Ascending aorta (tissue), 2 donors: ENCODE measurements at regions of chr3 and their contacts with region 1.

Region 1: GRCh38 chr3:77530870-77531269 is 491.0 kb downstream of the ROBO2 start:
- DNase-seq: peak in 1 of 2 donors; percentile 65
- H3K4me3 ChIP-seq: peak overlapping the region; percentile 1 to 4
- H3K27ac ChIP-seq: peak overlapping the region; percentile 6 to 47
- H3K4me1 ChIP-seq: no peaks in the 10 kb centered on the region
- H3K27me3 ChIP-seq: no peaks in the 10 kb centered on the region
- CTCF ChIP-seq: no peak

Region 2: DNA sequence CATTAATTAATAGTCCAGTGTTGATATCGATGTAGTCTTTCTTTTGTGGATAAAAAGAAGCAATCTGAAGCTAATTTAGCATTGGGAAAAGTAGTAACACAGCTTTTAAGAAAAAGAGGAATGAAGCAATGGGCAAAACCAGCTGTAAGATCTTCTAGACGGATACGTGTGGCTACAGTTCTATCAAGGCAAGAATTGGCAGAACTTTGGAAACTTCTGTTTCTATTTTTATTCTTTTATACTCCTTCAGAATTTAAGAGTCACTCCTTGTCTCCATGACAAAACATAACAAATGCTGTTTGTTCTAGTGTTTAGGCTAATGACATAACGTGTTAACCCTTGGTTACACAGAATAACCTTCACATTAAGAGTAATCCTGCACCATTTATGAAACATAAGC is 201.8 kb before region 1 on chr3:
- intact Hi-C with region 1: loop called (anchors 5 kb)
- DNase-seq: no peak
- H3K4me3 ChIP-seq: peak overlapping the region in 1 of 2 donors; percentile 36
- H3K27ac ChIP-seq: peak overlapping the region; percentile 68 to 72
- H3K4me1 ChIP-seq: peaks cover 0 to 20% of the 10 kb centered on the region in 2 donors
- H3K27me3 ChIP-seq: no peaks in the 10 kb centered on the region
- CTCF ChIP-seq: no peak

Region 3: GRCh38 chr3:77370413-77370812 is 160.5 kb before region 1 on chr3:
- intact Hi-C with region 1: loop called (anchors 10 kb)
- DNase-seq: peak in 1 of 2 donors; percentile 72
- H3K4me3 ChIP-seq: no peak overlapping the region
- H3K27ac ChIP-seq: peak overlapping the region in 1 of 2 donors; percentile 18
- H3K4me1 ChIP-seq: peaks cover 0 to 2% of the 10 kb centered on the region in 2 donors
- H3K27me3 ChIP-seq: no peaks in the 10 kb centered on the region
- CTCF ChIP-seq: no peak

Region 4: DNA sequence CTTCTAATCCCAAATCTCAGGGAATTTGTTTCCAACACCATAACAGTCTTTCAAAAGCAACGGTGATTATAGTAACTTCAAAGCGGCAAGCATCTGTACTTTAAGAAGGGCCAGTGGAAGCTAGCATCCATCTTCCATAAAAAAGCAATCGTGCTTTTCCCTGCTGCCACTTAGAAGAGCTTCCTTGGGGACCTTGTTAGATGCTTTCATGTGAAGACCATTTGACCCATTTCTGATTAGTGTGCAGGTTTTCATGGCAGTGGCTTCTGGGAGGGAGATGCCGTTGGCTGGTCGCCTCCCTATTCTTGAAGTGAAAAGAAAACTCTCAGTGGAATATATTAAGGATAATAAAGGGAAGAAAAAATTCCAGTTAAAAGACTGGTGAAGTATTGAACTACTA is 136.8 kb before region 1 on chr3:
- intact Hi-C with region 1: no loop called
- DNase-seq: no peak
- H3K4me3 ChIP-seq: no peak overlapping the region
- H3K27ac ChIP-seq: no peak overlapping the region
- H3K4me1 ChIP-seq: no peaks in the 10 kb centered on the region
- H3K27me3 ChIP-seq: no peaks in the 10 kb centered on the region
- CTCF ChIP-seq: no peak

Region 5: DNA sequence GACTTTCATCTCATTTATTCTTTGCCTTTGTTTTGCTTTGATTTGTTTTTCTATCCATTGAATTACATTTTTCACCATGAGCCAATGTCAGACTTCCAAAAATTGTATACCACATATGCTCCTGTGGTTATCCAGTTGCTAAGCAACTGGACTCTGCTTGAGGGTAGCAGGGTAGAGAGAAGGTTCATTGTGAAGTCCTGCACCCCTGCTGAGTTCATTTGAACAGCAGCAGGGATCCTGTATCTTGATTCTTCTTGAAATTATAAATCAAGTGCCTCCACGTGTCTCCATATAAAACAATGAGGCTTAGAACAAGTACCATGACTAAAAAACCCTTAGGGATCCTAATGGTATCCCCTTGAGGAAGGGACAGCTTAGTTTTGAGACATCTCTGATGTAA is 41.7 kb before region 1 on chr3:
- intact Hi-C with region 1: no loop called
- DNase-seq: no peak
- H3K4me3 ChIP-seq: no peak overlapping the region
- H3K27ac ChIP-seq: no peak overlapping the region
- H3K4me1 ChIP-seq: no peaks in the 10 kb centered on the region
- H3K27me3 ChIP-seq: no peaks in the 10 kb centered on the region
- CTCF ChIP-seq: no peak

Region 6: DNA sequence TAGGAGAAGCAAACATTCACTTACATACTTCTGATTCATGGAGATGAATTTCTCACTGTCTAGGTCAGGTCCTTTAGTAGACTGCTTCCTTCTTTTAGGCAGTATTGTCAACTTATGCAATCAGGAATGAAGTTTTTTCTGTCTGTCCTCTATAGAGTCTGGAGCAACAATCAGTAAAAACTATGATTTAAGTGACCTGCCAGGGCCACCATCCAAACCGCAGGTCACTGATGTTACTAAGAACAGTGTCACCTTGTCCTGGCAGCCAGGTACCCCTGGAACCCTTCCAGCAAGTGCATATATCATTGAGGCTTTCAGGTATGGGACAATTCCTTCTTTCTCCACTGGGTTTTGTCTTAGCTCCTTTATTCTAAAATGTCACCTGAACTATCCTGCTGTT is 32.1 kb after region 1 on chr3:
- intact Hi-C with region 1: no loop called
- DNase-seq: no peak
- H3K4me3 ChIP-seq: no peak overlapping the region
- H3K27ac ChIP-seq: no peak overlapping the region
- H3K4me1 ChIP-seq: no peaks in the 10 kb centered on the region
- H3K27me3 ChIP-seq: no peaks in the 10 kb centered on the region
- CTCF ChIP-seq: no peak